ENCODE measurements at regions of chr4 and their contacts with region 1.

Region 1: GRCh38 chr4:39066371-39066770 is 4.3 kb downstream of the KLHL5 start:
- DNase-seq: no peak
- H3K4me3 ChIP-seq: no peak overlapping the region
- H3K27ac ChIP-seq: no peak overlapping the region
- H3K4me1 ChIP-seq: no peaks in the 10 kb centered on the region
- H3K27me3 ChIP-seq: no peaks in the 10 kb centered on the region
- CTCF ChIP-seq: no peak
- POLR2A ChIP-seq: no peak

Region 2: GRCh38 chr4:39044364-39044955 is 21.9 kb before region 1 on chr4:
- intact Hi-C with region 1: loop called (anchors 1 kb)
- DNase-seq: peak; percentile 82 to 90
- H3K4me3 ChIP-seq: peak overlapping the region; percentile 75 to 93 (median 91)
- H3K27ac ChIP-seq: peak overlapping the region; percentile 93 to 99
- H3K4me1 ChIP-seq: no peaks in the 10 kb centered on the region
- H3K27me3 ChIP-seq: no peaks in the 10 kb centered on the region
- CTCF ChIP-seq: no peak
- POLR2A ChIP-seq: no peak

Region 3: DNA sequence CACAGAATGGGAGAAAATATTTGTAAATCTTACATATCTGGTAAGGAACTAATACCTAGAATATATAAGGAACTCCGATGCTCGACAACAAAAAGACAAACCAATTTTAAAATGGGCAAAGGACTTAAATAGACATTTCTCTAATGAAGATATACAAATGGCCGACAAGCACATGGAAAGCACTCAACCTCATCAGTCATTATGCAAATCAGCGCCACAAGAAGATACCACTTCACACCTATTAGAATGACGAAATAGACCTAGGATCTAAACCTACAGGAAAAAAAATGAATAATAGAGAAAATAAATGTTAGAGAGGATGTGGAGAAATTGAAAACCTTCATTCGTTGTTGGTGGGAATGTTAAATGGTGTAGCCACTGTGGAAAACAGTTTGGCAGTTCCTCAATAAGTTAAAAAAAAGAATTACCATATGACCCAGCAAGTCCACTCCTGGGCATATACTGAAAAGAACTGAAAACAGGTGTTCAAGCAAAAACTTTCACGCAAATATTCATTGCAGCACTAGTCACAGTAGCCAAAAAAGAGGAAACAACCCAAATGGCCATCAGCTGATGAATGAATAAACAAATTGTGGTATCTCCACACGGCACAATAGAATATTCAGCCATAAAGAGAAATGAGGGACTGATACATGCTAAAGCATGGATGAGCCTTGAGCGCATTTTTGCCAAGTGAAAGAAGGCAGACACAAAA is 58.7 kb after region 1 on chr4:
- intact Hi-C with region 1: no loop called
- DNase-seq: no peak
- H3K4me3 ChIP-seq: no peak overlapping the region
- H3K27ac ChIP-seq: no peak overlapping the region
- H3K4me1 ChIP-seq: no peaks in the 10 kb centered on the region
- H3K27me3 ChIP-seq: no peaks in the 10 kb centered on the region
- CTCF ChIP-seq: no peak
- POLR2A ChIP-seq: no peak

Region 4: GRCh38 chr4:39383690-39384089 is 317.3 kb after region 1 on chr4:
- intact Hi-C with region 1: no loop called
- DNase-seq: no peak
- H3K4me3 ChIP-seq: no peak overlapping the region
- H3K27ac ChIP-seq: no peak overlapping the region
- H3K4me1 ChIP-seq: no peaks in the 10 kb centered on the region
- H3K27me3 ChIP-seq: no peaks in the 10 kb centered on the region
- CTCF ChIP-seq: no peak
- POLR2A ChIP-seq: no peak

Region 5: DNA sequence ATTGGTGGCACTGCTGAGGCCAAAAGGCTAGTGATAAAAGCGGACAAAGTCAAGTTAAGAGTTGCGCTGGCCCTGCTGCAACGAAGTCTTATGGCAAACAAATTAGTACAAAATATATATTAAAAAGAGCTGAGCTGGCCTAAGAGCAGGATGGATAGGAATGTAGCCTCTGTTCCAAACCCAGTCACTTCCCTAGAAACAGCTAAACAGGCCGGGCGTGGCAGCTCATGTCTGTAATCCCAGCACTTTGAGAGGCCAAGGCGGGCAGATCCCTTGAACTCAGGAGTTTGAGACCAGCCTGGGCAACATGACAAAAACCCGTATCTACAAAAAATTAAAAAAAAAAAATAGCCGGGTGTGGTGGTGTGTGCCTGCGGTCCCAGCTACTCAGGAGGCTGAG is 493.3 kb after region 1 on chr4:
- intact Hi-C with region 1: no loop called
- DNase-seq: no peak
- H3K4me3 ChIP-seq: no peak overlapping the region
- H3K27ac ChIP-seq: no peak overlapping the region
- H3K4me1 ChIP-seq: no peaks in the 10 kb centered on the region
- H3K27me3 ChIP-seq: no peaks in the 10 kb centered on the region
- CTCF ChIP-seq: no peak
- POLR2A ChIP-seq: no peak

Region 6: GRCh38 chr4:39942507-39942906 is 876.1 kb after region 1 on chr4:
- intact Hi-C with region 1: no loop called
- DNase-seq: no peak
- H3K4me3 ChIP-seq: no peak overlapping the region
- H3K27ac ChIP-seq: no peak overlapping the region
- H3K4me1 ChIP-seq: no peaks in the 10 kb centered on the region
- H3K27me3 ChIP-seq: no peaks in the 10 kb centered on the region
- CTCF ChIP-seq: no peak
- POLR2A ChIP-seq: no peak